ENCODE measurements at regions of chr17 and their contacts with region 1.

Region 1: GRCh38 chr17:74176546-74177001 is 26.9 kb upstream of the RPL38 start:
- DNase-seq: peak; percentile 44 to 51
- ATAC-seq: peak; percentile 76 to 91 (median 86)
- H3K4me3 ChIP-seq: no peak overlapping the region
- H3K27ac ChIP-seq: no peak overlapping the region
- H3K4me1 ChIP-seq: no peaks in the 10 kb centered on the region
- H3K27me3 ChIP-seq: peaks cover 0 to 69% (median 59%) of the 10 kb centered on the region in 7 donors
- CTCF ChIP-seq: peak; percentile 60 to 83 (median 77)

Region 2: DNA sequence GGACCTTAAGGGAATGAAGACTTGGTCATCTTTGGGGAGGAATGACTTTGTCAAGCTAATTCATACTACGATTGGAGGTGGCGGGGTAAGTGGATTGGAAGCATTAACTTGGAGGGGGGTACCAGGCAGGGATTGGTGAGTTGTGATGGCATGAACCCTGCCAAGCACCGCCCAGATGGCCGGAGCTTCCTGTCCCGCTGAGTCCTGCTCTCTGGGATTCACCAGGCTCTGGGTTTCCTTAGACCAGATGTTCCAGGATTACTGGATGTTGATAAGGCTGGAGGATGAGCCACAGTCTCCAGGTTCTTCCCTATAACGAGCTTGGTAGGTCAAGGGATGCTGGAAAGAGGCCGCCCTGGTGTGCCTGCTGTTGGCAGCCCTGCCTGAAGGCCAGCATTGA is 687.2 kb before region 1 on chr17:
- intact Hi-C with region 1: loop called in 1 of 10 experiments (anchors 2 kb)
- DNase-seq: no peak
- ATAC-seq: no peak
- H3K4me3 ChIP-seq: no peak overlapping the region
- H3K27ac ChIP-seq: no peak overlapping the region
- H3K4me1 ChIP-seq: no peaks in the 10 kb centered on the region
- H3K27me3 ChIP-seq: peaks cover 0 to 16% (median 0%) of the 10 kb centered on the region in 7 donors
- CTCF ChIP-seq: no peak

Region 3: GRCh38 chr17:73645050-73645978 is 531.3 kb before region 1 on chr17:
- intact Hi-C with region 1: loop called in 5 of 10 experiments (anchors 5 to 10 kb)
- DNase-seq: peak; percentile 31 to 54
- ATAC-seq: peak; percentile 60 to 83 (median 76)
- H3K4me3 ChIP-seq: peak overlapping the region in 9 of 10 donors; percentile 42 to 66 (median 55)
- H3K27ac ChIP-seq: peak overlapping the region in 5 of 10 donors; percentile 1 to 60 (median 40)
- H3K4me1 ChIP-seq: peaks cover 0 to 31% (median 20%) of the 10 kb centered on the region in 9 donors
- H3K27me3 ChIP-seq: peaks cover 0 to 92% (median 70%) of the 10 kb centered on the region in 7 donors
- CTCF ChIP-seq: peak in 5 of 9 donors; percentile 6 to 31 (median 20)

Region 4: DNA sequence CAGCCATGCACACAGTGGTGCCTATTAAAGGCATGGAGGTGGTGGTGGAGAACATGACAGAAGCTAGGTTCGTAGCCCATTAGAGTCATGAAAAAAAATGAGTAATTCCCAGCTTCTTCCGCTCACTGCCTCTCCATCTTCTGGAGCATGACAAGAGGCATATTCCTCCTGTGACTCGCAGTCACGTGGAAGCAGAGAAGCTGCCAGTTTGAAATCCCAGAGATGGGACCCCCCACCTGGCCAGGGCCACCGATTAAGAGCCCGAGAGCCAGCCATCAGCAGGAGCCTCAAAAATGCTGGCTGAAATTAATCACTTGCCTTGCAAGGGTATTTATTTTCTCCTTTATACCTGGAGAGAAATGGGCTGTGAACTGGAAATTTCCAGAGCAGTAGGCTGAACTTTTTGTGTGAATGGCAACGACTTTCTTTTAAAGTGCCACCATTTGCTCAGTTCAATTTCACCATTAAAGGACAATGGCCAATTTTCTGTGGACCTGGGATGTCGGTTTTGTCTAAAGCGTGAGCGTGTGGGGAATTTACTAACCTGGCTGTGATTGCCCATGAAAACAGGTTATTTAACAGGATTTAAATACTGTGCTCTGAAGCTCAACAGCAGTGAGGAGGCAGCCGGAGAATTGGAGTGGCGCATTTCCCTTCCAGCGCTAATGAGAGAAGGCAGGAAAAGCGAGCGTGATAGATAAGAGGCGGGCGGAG is 342.6 kb before region 1 on chr17:
- intact Hi-C with region 1: loop called in 1 of 10 experiments (anchors 5 kb)
- DNase-seq: no peak
- ATAC-seq: no peak
- H3K4me3 ChIP-seq: no peak overlapping the region
- H3K27ac ChIP-seq: no peak overlapping the region
- H3K4me1 ChIP-seq: no peaks in the 10 kb centered on the region
- H3K27me3 ChIP-seq: peaks cover 0 to 50% (median 44%) of the 10 kb centered on the region in 7 donors
- CTCF ChIP-seq: no peak

Region 5: GRCh38 chr17:74099442-74100340 is 76.9 kb before region 1 on chr17:
- intact Hi-C with region 1: no loop called
- DNase-seq: no peak
- ATAC-seq: no peak
- H3K4me3 ChIP-seq: no peak overlapping the region
- H3K27ac ChIP-seq: no peak overlapping the region
- H3K4me1 ChIP-seq: no peaks in the 10 kb centered on the region
- H3K27me3 ChIP-seq: peaks cover 0 to 75% (median 49%) of the 10 kb centered on the region in 7 donors
- CTCF ChIP-seq: no peak

Region 6: GRCh38 chr17:74118504-74118903 is 58.1 kb before region 1 on chr17:
- intact Hi-C with region 1: no loop called
- DNase-seq: no peak
- ATAC-seq: no peak
- H3K4me3 ChIP-seq: no peak overlapping the region
- H3K27ac ChIP-seq: no peak overlapping the region
- H3K4me1 ChIP-seq: no peaks in the 10 kb centered on the region
- H3K27me3 ChIP-seq: peaks cover 0 to 81% (median 40%) of the 10 kb centered on the region in 7 donors
- CTCF ChIP-seq: no peak

Region 7: GRCh38 chr17:74259667-74260524 is 83.3 kb after region 1 on chr17:
- intact Hi-C with region 1: no loop called
- DNase-seq: no peak
- ATAC-seq: peak in 2 of 8 donors; percentile 25 to 36
- H3K4me3 ChIP-seq: no peak overlapping the region
- H3K27ac ChIP-seq: no peak overlapping the region
- H3K4me1 ChIP-seq: no peaks in the 10 kb centered on the region
- H3K27me3 ChIP-seq: no peaks in the 10 kb centered on the region
- CTCF ChIP-seq: no peak

Measured in heart right ventricle (tissue), 16 donors.